ENCODE measurements at regions of chr1 and their contacts with region 1.

Region 1: DNA sequence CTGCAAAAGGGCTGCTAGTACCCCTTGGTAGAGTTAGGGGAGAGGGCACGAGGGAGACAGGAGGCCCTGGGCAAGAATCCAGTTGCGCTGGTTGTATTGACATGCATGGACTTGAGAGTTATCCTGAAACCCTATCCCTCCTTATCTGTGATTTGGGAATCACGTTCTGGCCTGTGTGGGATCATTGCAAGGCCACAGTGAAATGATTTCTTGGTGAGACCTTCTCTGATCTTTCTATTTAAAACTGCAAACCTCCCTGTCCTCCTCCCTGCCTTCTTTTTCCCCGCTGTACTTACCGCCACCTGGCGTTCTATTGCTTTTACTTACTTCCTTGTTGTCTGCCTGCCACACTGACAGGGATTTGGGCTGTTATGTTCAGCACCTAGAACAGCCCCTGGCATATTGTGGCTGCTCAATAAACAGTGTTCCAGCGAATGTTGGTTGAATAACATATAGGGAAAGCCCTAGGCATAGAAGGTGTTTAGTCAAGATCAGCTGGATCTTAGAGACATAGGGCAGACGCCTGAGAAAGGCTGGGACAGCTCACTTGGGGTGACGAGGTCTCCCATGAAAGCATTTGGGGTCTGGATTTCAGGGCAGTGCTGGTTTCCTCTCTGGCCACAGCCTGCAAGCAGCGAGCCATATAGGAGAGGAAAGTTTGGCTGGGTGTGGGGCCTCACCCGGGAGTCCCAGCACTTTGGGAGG is 25.6 kb downstream of the ALPL start:
- DNase-seq: no peak
- H3K4me3 ChIP-seq: no peak overlapping the region
- CTCF ChIP-seq: peak; percentile 63

Region 2: GRCh38 chr1:21520899-21521716 is 13.7 kb before region 1 on chr1:
- CTCF ChIA-PET with region 1: interaction called, 40 read pairs
- POLR2A ChIA-PET with region 1: no interaction called
- DNase-seq: peak; percentile 23
- H3K4me3 ChIP-seq: no peak overlapping the region
- CTCF ChIP-seq: no peak

Region 3: DNA sequence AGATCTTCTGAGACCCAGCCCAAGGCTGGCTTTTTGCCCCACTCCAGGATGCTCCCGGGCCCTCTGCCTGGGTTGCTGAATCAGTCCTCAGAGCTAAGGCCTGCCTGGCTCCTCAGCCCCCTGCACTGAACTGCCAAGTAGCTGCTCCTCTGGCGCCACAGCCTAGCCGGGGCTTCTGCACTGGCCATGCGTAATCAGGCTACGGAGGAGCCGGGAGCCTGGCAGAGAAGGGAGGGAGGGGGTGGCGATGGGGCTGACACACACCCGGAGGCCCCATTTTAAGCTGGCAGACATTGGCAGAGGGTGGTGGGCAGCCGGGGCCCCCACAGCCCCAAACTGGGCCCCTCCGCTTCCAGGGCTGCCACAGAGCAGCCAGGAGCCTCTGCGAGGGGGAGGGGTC is 13.1 kb after region 1 on chr1:
- CTCF ChIA-PET with region 1: interaction called, 29 read pairs
- POLR2A ChIA-PET with region 1: no interaction called
- DNase-seq: no peak
- H3K4me3 ChIP-seq: no peak overlapping the region
- CTCF ChIP-seq: no peak